SK-N-SH (cell line): ENCODE measurements at regions of chr7 and their contacts with region 1.

Region 1: GRCh38 chr7:105531792-105532671 is at the start of gene RINT1:
- DNase-seq: peak; percentile 95
- H3K4me3 ChIP-seq: peak within 1 kb of the TSS; percentile 76 to 99
- H3K27ac ChIP-seq: peak within 1 kb of the TSS; percentile 69 to 75; a peak in 3 of 4 replicates
- H3K4me1 ChIP-seq: peaks cover 4 to 7% of the 10 kb centered on the region in 2 experiments; a peak in 2 of 4 replicates
- H3K27me3 ChIP-seq: no peaks in the 10 kb centered on the region
- CTCF ChIP-seq: peak; percentile 91
- EP300 ChIP-seq: peak in 1 of 2 experiments; percentile 50; a peak in 1 of 4 replicates
- RAD21 ChIP-seq: peak; percentile 35
- polyA plus RNA-seq, gene RINT1: 13.1 and 19.1 TPM in 2 replicates

Region 2: DNA sequence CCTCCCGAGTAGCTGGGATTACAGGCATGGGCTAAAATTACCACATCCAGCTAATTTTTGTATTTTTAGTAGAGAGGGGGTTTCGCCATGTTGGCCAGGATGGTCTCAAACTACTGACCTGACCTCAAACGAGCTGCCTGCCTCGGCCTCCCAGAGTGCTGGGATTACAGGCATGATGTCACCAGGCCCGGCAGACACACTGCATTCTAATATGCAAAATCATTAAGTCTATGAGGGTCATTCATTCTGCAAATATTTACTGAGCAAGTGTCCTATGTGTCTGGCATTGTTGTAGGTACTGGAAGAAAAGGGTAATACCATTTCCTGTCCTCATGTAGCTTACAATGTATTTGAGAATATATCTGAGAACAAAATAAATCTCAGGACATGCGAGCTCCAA is 12.7 kb before region 1 on chr7:
- CTCF ChIA-PET with region 1: interaction called, 13 read pairs
- POLR2A ChIA-PET with region 1: interaction called, 5 read pairs
- DNase-seq: no peak
- H3K4me3 ChIP-seq: no peak overlapping the region
- H3K27ac ChIP-seq: no peak overlapping the region
- H3K4me1 ChIP-seq: peaks cover 3 to 6% of the 10 kb centered on the region in 2 experiments; a peak in 2 of 4 replicates
- H3K27me3 ChIP-seq: no peaks in the 10 kb centered on the region
- CTCF ChIP-seq: no peak
- EP300 ChIP-seq: no peak
- RAD21 ChIP-seq: no peak